MCF 10A (cell line): ENCODE measurements at regions of chr1 and their contacts with region 1.

Region 1: DNA sequence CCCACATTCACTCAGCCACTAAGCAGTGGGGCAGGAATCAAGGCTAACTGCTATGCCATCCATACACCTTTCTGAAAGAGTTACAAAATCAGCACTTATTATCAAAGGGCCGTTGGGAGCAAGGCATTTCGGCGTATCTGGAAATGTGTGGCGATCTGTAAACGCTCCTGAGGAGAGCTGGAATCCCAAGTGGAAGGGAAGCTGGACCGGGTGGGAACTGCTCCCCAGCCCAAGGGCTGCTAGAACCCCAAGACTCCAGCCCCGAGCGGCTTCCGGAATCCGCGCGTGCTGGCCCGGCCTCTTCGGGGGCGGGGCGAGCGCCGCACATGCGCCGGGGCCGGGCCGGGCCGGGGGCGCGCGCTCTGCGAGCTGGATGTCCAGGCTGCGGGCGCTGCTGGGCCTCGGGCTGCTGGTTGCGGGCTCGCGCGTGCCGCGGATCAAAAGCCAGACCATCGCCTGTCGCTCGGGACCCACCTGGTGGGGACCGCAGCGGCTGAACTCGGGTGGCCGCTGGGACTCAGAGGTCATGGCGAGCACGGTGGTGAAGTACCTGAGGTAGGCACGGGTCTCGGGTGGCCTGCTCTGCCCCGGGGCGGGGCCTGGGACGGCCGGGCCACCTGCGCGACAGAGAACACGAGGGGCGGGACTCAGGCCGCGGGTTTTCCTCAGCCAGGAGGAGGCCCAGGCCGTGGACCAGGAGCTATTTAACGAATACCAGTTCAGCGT is at the start of gene NAXE:
- DNase-seq: peak; percentile 77
- H3K4me3 Mint-ChIP-seq: peak within 1 kb of the TSS; percentile 77
- H3K27ac Mint-ChIP-seq: peak within 1 kb of the TSS; percentile 65
- H3K4me1 Mint-ChIP-seq: peaks cover 13% of the 10 kb centered on the region
- H3K27me3 Mint-ChIP-seq: no peaks in the 10 kb centered on the region
- CTCF ChIP-seq: no peak
- total RNA-seq, gene NAXE: 141 and 155 TPM in 2 replicates

Region 2: GRCh38 chr1:155591770-155592169 is 999.8 kb before region 1 on chr1:
- CTCF ChIA-PET with region 1: no interaction called
- POLR2A ChIA-PET with region 1: no interaction called
- intact Hi-C with region 1: no loop called
- DNase-seq: peak; percentile 78
- H3K4me3 Mint-ChIP-seq: no peak overlapping the region
- H3K27ac Mint-ChIP-seq: no peak overlapping the region
- H3K4me1 Mint-ChIP-seq: no peaks in the 10 kb centered on the region
- H3K27me3 Mint-ChIP-seq: no peaks in the 10 kb centered on the region
- CTCF ChIP-seq: peak; percentile 80

Region 3: DNA sequence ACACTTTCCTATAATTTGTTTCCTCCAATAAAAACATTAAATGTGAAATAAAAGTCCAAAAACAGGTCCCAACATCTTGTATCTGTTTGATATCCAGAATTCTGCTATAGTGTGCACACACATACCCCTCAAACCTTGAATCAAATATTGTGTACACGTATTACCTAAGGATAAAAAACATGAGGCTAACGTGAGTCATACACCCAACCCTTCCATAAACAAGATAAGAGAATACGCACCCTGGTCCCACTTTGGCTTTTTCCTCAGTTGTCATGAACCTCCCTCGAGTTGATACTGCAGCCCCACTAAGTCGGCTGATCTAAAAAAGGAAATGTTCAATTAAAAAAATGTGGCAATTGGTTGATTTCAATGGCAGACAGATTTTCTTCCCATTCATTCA is 662.5 kb before region 1 on chr1:
- CTCF ChIA-PET with region 1: no interaction called
- POLR2A ChIA-PET with region 1: no interaction called
- intact Hi-C with region 1: no loop called
- DNase-seq: peak; percentile 62
- H3K4me3 Mint-ChIP-seq: no peak overlapping the region
- H3K27ac Mint-ChIP-seq: no peak overlapping the region
- H3K4me1 Mint-ChIP-seq: peaks cover 47% of the 10 kb centered on the region
- H3K27me3 Mint-ChIP-seq: no peaks in the 10 kb centered on the region
- CTCF ChIP-seq: no peak

Region 4: DNA sequence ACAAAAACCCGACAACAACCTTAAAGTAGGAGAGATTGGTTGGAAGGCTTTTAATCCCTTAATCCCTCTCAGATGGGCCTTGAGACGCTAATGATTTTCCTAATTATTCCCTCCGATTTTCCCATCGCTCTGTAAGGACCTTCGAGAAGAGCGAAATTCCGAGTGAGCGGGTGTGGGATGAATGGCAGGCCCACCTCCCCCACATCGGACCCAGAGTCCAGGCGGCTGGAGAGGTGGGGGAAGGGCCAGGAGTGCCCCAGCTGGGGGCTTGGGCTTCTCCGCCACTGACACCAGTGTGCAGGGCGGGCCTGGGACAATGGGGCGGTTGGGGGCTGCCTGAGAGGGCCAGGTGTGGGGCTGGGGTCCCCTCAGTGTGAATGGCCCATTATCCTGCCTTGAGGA is 199.1 kb before region 1 on chr1:
- CTCF ChIA-PET with region 1: no interaction called
- POLR2A ChIA-PET with region 1: no interaction called
- intact Hi-C with region 1: no loop called
- DNase-seq: no peak
- H3K4me3 Mint-ChIP-seq: no peak overlapping the region
- H3K27ac Mint-ChIP-seq: no peak overlapping the region
- H3K4me1 Mint-ChIP-seq: no peaks in the 10 kb centered on the region
- H3K27me3 Mint-ChIP-seq: no peaks in the 10 kb centered on the region
- CTCF ChIP-seq: no peak

Region 5: DNA sequence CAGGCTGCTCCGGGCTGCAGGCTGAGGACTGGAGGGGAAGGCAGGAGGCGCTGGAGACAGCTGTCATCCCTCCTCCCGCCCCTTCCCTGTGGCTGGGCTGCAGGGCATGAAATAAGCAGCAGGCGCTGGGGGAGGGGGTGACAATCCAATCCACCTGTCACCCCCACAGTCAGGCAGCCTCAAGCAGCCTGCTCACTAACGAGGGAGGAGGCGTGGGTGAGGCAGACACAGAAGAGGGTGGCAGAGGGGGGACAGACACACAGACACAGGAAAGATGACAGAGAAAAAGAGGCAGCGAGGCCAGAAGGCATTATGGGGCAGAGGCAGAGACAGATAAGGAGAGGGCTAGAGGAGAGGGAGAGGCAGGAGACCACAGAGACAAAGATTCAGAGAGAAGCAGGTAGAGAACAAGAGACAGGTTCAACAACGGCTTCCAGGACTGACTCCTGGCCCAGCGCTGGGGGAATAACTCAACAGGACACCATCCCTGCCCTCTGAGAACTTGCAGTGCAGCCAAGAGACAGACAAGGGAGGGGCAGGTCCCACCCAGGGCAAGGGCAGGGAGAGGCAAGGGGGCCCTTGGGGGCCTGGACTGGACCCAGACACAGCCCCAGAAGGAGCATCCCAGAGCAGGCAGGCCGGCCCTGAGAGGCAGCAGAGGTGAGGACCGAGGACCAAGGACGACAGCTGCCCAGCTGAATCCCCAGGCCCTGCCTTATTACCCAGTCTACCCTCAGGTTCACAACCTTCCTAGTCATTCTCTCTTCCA is 102.2 kb before region 1 on chr1:
- CTCF ChIA-PET with region 1: no interaction called
- POLR2A ChIA-PET with region 1: no interaction called
- intact Hi-C with region 1: no loop called
- DNase-seq: no peak
- H3K4me3 Mint-ChIP-seq: peak overlapping the region; percentile 44
- H3K27ac Mint-ChIP-seq: peak overlapping the region; percentile 74
- H3K4me1 Mint-ChIP-seq: peaks cover 74% of the 10 kb centered on the region
- H3K27me3 Mint-ChIP-seq: no peaks in the 10 kb centered on the region
- CTCF ChIP-seq: no peak

Region 6: DNA sequence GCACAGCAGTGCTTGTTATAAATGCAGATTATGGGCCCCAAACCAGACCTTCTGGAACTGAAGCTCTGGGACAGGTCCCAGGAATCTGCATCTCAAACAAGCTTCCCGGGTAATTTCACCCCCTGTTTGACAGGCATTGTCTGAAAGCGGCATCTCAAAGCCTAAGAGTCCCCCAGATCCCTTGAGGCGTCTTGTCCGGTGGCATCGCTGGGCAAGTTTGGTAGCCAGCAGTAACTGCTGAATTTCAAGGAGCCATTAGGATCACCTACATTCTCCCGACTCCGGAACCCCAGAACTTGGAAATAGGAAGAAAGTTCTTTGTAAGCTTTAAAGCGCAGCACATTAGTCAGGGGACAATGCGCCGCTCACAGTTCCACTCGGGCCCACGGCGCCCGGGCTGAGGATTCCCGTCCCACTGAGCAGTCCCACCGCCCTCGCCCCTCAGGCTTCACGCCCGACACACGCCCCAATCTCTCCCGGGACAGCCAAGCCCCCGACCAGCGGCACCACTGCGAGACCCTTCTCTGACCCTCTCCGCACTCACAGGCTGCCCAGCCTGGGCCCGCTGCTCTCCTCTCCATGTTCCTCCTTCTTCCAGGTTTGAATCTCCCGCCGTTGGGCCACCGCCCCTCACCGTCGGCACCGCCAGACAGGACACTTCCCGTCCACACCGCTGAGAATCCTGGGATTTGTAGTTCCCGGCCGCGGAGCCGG is 19.5 kb before region 1 on chr1 and contains the start of gene IQGAP3:
- CTCF ChIA-PET with region 1: interaction called, 4 read pairs
- POLR2A ChIA-PET with region 1: interaction called, 13 read pairs
- intact Hi-C with region 1: no loop called
- DNase-seq: peak; percentile 94
- H3K4me3 Mint-ChIP-seq: peak within 1 kb of the TSS; percentile 87
- H3K27ac Mint-ChIP-seq: peak within 1 kb of the TSS; percentile 70
- H3K4me1 Mint-ChIP-seq: peaks cover 28% of the 10 kb centered on the region
- H3K27me3 Mint-ChIP-seq: peaks cover 11% of the 10 kb centered on the region
- CTCF ChIP-seq: no peak
- total RNA-seq, gene IQGAP3: 36.4 and 48.3 TPM in 2 replicates